Dorsolateral prefrontal cortex (tissue), 120 donors: ENCODE measurements at regions of chr9 and their contacts with region 1.

Region 1: DNA sequence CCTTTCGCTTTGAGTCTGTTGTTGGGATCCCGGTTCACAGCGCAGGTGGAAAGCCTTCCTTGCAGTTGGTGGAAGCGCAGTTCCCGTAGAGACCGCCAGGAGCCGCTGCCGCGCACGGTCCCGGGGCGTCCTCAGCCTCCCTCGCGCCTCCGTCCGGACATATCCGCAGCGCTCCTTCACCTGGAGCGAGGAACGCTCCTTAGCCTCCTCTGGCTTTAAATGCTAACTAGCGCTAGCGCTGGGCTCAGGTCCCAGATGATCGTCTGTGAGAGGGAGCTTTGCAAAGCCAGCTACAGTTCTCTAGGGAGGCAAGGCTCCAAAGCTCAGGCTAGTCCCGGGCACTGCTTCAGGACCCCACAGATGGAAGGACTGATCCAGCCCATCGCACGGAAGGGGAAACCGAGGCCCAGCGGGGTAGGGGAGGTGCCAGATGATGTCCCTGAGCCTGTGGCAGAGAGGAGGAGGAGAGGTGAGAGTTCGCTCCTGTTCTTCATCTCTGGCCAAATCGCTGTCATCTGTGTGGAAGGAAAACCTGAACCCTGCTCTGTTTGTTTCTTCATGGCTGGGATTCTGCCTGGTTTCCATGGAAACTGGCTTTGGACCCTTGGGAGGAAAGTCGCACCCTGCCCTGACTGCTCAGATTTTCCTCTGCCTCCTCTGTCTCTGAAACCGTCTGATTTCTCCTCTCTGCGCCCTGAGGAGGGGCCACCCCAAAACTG is 31.4 kb downstream of the COL15A1 start:
- DNase-seq: peak in 9 of 10 donors; percentile 69 to 88 (median 78)
- H3K4me3 ChIP-seq: peak overlapping the region in 57 of 59 donors; percentile 11 to 67 (median 44)
- H3K27ac ChIP-seq: peak overlapping the region in 1 of 59 donors; percentile 25
- H3K27me3 ChIP-seq: peaks cover 0 to 7% (median 0%) of the 10 kb centered on the region in 45 donors
- CTCF ChIP-seq: peak; percentile 69 to 99 (median 96)

Region 2: DNA sequence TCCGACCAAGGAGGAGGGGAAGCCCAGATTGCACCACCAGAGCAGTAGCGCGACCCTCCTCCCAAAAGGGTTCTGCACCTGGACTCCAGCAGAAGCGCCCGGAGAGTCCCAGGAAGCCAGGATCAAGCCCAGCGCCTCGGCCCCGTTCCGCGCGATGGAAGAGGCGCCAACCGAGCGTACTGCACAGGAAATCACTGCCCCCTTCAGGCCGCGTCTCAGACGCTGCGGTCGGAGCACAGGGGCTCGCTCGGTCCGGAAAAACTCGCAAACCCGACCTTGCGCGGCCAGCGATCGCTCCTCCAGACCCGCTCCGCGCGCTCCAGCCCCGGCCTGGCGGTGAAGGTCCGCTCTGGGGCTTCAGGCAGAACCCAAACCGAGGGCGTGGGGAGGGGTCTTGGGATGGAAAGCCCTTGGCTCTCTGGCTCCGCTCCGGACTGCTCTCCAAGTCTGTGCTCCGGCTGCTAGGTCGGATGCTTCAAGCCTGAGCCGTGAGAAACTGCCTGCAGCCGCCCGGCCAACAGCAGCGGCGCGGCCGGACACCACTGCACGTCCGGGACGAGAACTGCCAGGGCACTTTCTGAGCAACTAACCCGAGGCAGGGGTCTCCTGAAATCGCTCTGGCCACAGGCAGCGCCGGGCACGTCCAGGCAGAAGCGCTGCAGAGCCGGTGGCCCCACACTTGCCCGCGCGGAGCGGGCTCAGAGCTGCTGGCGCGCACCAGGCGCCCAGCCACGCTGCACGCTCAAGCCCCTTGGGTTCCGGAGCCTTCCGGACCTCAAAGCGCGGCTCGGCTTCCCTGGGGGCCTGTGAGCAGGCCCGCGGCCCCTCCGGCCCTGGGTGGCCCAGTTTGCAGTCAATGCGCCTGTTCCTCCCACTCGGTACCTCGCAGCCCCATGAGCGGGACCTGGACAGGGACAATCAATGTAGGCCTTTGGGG is 267.7 kb before region 1 on chr9:
- intact Hi-C with region 1: no loop called
- DNase-seq: peak in 8 of 10 donors; percentile 47 to 89 (median 68)
- H3K4me3 ChIP-seq: peak overlapping the region; percentile 15 to 74 (median 57)
- H3K27ac ChIP-seq: peak overlapping the region in 57 of 59 donors; percentile 4 to 88 (median 75)
- H3K27me3 ChIP-seq: peaks cover 0 to 79% (median 22%) of the 10 kb centered on the region in 45 donors
- CTCF ChIP-seq: peak in 53 of 56 donors; percentile 18 to 67 (median 49)

Region 3: GRCh38 chr9:99104459-99105151 is 129.5 kb after region 1 on chr9 and contains the start of gene TGFBR1:
- intact Hi-C with region 1: loop called in 1 of 2 experiments (anchors 10 kb)
- DNase-seq: peak; percentile 87 to 98 (median 91)
- H3K4me3 ChIP-seq: peak within 1 kb of the TSS; percentile 54 to 88 (median 79)
- H3K27ac ChIP-seq: peak within 1 kb of the TSS in 55 of 59 donors; percentile 29 to 90 (median 77)
- H3K27me3 ChIP-seq: no peaks in the 10 kb centered on the region
- CTCF ChIP-seq: peak in 24 of 56 donors; percentile 8 to 52 (median 22)
- total RNA-seq, gene TGFBR1: 9.7 to 58.1 (median 21.3) TPM

Region 4: GRCh38 chr9:99336005-99336404 is 360.9 kb after region 1 on chr9:
- intact Hi-C with region 1: no loop called
- DNase-seq: peak in 1 of 10 donors; percentile 33
- H3K4me3 ChIP-seq: no peak overlapping the region
- H3K27ac ChIP-seq: no peak overlapping the region
- H3K27me3 ChIP-seq: no peaks in the 10 kb centered on the region
- CTCF ChIP-seq: peak in 1 of 56 donors; percentile 10